Mammary epithelial cell (primary cell): ENCODE measurements at regions of chr11 and their contacts with region 1.

Region 1: DNA sequence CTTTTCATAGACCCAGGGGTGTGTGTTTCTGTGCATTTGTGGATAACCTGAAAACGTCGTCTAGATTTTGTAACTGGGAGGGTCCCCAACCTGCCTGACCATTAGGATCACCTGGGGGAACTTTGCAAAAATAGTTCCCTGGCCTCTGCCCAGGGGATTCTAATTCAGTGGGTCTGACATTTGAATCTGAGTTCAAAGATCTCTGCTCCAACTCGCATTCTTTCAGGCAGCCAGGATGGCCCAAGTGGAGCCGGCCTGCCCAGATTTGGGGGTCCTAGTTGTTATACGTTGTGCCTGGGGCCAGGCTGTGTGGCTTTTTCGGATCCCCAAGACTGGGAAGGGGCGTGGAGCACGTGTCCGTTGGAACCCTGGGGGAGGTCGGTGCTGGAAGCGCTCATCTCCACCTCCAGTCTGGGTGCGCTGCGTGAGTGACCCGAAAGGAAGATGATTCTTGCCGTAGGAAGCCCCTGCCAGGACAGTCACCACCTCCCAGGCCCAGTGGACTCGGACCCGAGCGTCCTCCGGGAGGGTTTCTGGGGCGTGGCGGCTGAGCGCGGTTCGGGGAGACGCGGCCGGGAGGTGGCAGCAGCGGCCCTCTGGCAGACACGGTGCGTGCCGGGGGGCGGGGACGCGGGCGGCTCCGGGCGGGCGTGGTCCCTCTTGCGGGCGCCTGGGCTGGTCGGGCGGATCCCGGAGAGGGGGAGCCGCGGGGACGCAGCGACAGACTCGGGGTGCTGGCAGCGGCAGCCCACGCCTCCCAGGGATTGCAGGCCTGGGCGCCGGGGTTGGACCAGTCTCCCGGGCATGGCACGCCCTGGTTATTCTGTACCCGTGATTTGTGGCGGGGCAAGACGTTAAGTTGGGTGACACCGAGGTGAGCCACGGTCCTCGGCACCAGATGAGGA is 29.2 kb upstream of the PLET1 start:
- DNase-seq: peak; percentile 55
- H3K4me3 ChIP-seq: peak overlapping the region; percentile 48 to 54 (median 51)
- H3K27ac ChIP-seq: no peak overlapping the region
- H3K4me1 ChIP-seq: peaks cover 18% of the 10 kb centered on the region
- H3K27me3 ChIP-seq: no peaks in the 10 kb centered on the region
- CTCF ChIP-seq: peak; percentile 56 to 75

Region 2: GRCh38 chr11:112002491-112003216 is 287.2 kb before region 1 on chr11:
- CTCF ChIA-PET with region 1: no interaction called
- dilution Hi-C with region 1: no loop called
- in situ Hi-C with region 1: no loop called
- intact Hi-C with region 1: no loop called
- DNase-seq: no peak
- H3K4me3 ChIP-seq: no peak overlapping the region
- H3K27ac ChIP-seq: no peak overlapping the region
- H3K4me1 ChIP-seq: no peaks in the 10 kb centered on the region
- H3K27me3 ChIP-seq: no peaks in the 10 kb centered on the region
- CTCF ChIP-seq: no peak

Region 3: GRCh38 chr11:112318193-112318592 is 28.4 kb after region 1 on chr11:
- CTCF ChIA-PET with region 1: no interaction called
- dilution Hi-C with region 1: no loop called
- in situ Hi-C with region 1: no loop called
- intact Hi-C with region 1: loop called (anchors 1 kb)
- DNase-seq: peak; percentile 90
- H3K4me3 ChIP-seq: no peak overlapping the region
- H3K27ac ChIP-seq: peak overlapping the region; percentile 32
- H3K4me1 ChIP-seq: peaks cover 40% of the 10 kb centered on the region
- H3K27me3 ChIP-seq: no peaks in the 10 kb centered on the region
- CTCF ChIP-seq: no peak

Region 4: GRCh38 chr11:112392904-112393303 is 103.1 kb after region 1 on chr11:
- CTCF ChIA-PET with region 1: no interaction called
- dilution Hi-C with region 1: no loop called
- in situ Hi-C with region 1: no loop called
- intact Hi-C with region 1: loop called (anchors 10 kb)
- DNase-seq: no peak
- H3K4me3 ChIP-seq: no peak overlapping the region
- H3K27ac ChIP-seq: no peak overlapping the region
- H3K4me1 ChIP-seq: no peaks in the 10 kb centered on the region
- H3K27me3 ChIP-seq: no peaks in the 10 kb centered on the region
- CTCF ChIP-seq: no peak

Region 5: DNA sequence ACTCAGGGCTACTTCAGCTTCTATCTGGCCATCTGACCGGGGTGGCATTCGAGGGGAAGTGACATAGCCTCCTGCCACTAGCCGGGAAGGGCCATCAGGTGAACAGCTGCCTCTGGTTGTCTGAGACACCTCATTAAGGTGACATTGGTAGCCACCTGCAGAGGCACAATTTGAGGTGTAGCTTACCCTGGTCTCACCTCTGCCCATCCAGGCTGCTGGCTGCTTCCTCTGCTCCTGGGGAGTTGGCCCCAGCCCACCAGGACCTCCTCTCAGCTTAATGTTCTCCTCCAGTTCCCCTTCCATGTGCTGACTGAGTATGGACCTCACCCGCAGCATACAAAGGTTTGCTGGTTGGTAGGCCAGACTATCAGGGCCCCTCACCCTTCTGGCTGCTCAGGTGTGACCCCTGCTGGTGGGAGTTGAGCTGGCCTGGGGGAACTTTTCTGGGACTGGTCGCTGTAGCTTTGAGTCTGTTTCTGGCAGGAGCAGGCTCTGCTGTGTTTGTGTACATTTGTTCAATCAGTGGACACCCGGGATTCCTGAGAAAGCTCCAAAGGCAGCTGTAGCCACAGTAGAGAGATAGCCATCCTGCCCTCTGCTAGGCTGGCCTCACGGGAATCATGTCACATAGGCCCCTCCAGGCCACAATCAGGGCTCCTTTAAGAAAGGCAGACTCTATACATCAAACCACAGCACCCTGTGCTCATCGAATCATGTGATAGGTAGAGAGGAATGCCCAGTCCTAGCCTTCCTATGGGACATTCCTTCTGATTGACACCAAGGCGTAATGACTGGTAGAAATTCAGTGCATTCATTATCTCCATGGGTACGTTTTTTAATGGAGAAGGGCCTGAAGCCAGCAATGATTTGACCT is 265.9 kb after region 1 on chr11:
- CTCF ChIA-PET with region 1: no interaction called
- dilution Hi-C with region 1: no loop called
- in situ Hi-C with region 1: no loop called
- intact Hi-C with region 1: loop called (anchors 1 kb)
- DNase-seq: peak; percentile 9
- H3K4me3 ChIP-seq: no peak overlapping the region
- H3K27ac ChIP-seq: no peak overlapping the region
- H3K4me1 ChIP-seq: peaks cover 4% of the 10 kb centered on the region
- H3K27me3 ChIP-seq: no peaks in the 10 kb centered on the region
- CTCF ChIP-seq: peak; percentile 58 to 72

Region 6: GRCh38 chr11:112795142-112795815 is 505.4 kb after region 1 on chr11:
- CTCF ChIA-PET with region 1: no interaction called
- dilution Hi-C with region 1: no loop called
- in situ Hi-C with region 1: loop called in 1 of 2 experiments (anchors 25 kb)
- intact Hi-C with region 1: loop called (anchors 1 kb)
- DNase-seq: peak; percentile 53
- H3K4me3 ChIP-seq: no peak overlapping the region
- H3K27ac ChIP-seq: no peak overlapping the region
- H3K4me1 ChIP-seq: no peaks in the 10 kb centered on the region
- H3K27me3 ChIP-seq: no peaks in the 10 kb centered on the region
- CTCF ChIP-seq: peak; percentile 87

Region 7: GRCh38 chr11:113289431-113290187 is 999.8 kb after region 1 on chr11:
- CTCF ChIA-PET with region 1: no interaction called
- dilution Hi-C with region 1: no loop called
- in situ Hi-C with region 1: loop called in 1 of 2 experiments (anchors 25 kb)
- intact Hi-C with region 1: loop called (anchors 1 kb)
- DNase-seq: peak; percentile 41
- H3K4me3 ChIP-seq: no peak overlapping the region
- H3K27ac ChIP-seq: no peak overlapping the region
- H3K4me1 ChIP-seq: no peaks in the 10 kb centered on the region
- H3K27me3 ChIP-seq: peaks cover 2% of the 10 kb centered on the region
- CTCF ChIP-seq: peak; percentile 97 to 99

Region 8: GRCh38 chr11:113332023-113332422 is 1042.2 kb after region 1 on chr11:
- CTCF ChIA-PET with region 1: no interaction called
- dilution Hi-C with region 1: no loop called
- in situ Hi-C with region 1: no loop called
- intact Hi-C with region 1: no loop called
- DNase-seq: no peak
- H3K4me3 ChIP-seq: no peak overlapping the region
- H3K27ac ChIP-seq: no peak overlapping the region
- H3K4me1 ChIP-seq: no peaks in the 10 kb centered on the region
- H3K27me3 ChIP-seq: no peaks in the 10 kb centered on the region
- CTCF ChIP-seq: no peak